ENCODE measurements at regions of chr5 and their contacts with region 1.

Region 1: GRCh38 chr5:107673368-107674136 is 2.8 kb upstream of the EFNA5 start:
- DNase-seq: peak; percentile 66 to 85 (median 82)
- H3K4me3 ChIP-seq: peak overlapping the region; percentile 46
- H3K27ac ChIP-seq: no peak overlapping the region
- H3K4me1 ChIP-seq: no peaks in the 10 kb centered on the region
- H3K27me3 ChIP-seq: no peaks in the 10 kb centered on the region
- CTCF ChIP-seq: peak; percentile 57 to 79 (median 69)
- EP300 ChIP-seq: no peak
- POLR2A ChIP-seq: no peak

Region 2: DNA sequence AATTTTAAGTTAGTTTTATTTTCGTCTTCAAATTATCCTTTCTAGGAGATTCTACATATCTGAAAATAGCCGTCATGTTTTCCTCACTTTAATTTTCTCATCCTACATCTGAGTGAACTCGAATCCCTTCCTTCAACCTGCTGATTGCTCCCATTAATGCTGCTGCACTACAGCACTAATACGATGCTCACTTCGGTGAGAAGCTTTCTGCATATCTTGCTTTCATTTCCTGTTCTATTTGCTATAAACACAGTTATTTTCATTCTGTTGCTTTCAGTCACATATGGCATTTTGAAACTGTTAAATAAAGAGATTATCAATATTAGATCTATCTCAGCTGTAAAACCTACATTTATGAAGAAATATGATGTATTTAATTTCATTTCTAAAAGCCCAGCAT is 752.0 kb before region 1 on chr5:
- intact Hi-C with region 1: loop called in 1 of 4 experiments (anchors 10 kb)
- DNase-seq: no peak
- H3K4me3 ChIP-seq: no peak overlapping the region
- H3K27ac ChIP-seq: no peak overlapping the region
- H3K4me1 ChIP-seq: no peaks in the 10 kb centered on the region
- H3K27me3 ChIP-seq: no peaks in the 10 kb centered on the region
- CTCF ChIP-seq: no peak
- EP300 ChIP-seq: no peak
- POLR2A ChIP-seq: no peak

Region 3: DNA sequence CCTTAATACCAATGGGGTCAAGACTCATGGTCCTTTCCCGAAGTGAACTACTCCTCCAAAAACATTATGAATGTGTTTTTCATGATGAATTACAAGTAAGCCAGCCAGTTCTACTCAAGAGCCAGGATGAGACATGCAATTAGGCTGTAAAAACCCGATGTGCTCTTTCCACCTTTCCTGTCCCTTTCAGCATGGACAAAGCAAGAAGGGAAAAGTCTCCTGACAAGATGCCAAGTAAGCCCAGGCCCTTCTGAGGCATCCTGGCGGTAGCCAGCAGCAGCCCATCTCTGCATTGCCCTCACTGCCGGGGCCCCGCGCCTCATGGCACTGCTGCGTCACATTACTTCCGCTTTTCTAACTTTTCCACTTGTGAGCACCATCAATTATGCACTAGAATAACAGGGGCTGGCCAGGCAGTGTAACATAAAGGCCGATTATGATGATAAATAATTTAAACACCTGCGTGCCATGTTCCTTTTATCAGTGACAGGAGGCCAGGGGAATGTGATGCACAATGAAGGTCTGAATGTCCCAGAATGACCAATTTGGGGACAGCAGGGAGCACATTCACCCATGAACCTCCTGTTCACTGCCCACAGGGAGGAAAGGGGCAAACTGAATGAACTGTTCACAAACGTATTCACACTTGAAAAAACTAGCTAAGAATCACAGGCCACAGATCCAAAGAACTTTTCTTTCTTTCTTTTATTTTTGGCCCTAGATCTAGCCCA is 40.2 kb before region 1 on chr5:
- intact Hi-C with region 1: no loop called
- DNase-seq: no peak
- H3K4me3 ChIP-seq: no peak overlapping the region
- H3K27ac ChIP-seq: no peak overlapping the region
- H3K4me1 ChIP-seq: peaks cover 2% of the 10 kb centered on the region
- H3K27me3 ChIP-seq: no peaks in the 10 kb centered on the region
- CTCF ChIP-seq: no peak
- EP300 ChIP-seq: no peak
- POLR2A ChIP-seq: no peak

Measured in ovary (tissue), 10 donors.